ENCODE measurements at regions of chr20 and their contacts with region 1.

Region 1: GRCh38 chr20:50348096-50348495 is 157.5 kb downstream of the CEBPB start:
- DNase-seq: no peak
- H3K4me3 ChIP-seq: no peak overlapping the region
- H3K27ac ChIP-seq: no peak overlapping the region
- H3K4me1 ChIP-seq: peaks cover 24% of the 10 kb centered on the region
- H3K27me3 ChIP-seq: no peaks in the 10 kb centered on the region
- CTCF ChIP-seq: no peak

Region 2: GRCh38 chr20:49915378-49916145 is 432.5 kb before region 1 on chr20 and contains the start of gene SPATA2:
- CTCF ChIA-PET with region 1: no interaction called
- POLR2A ChIA-PET with region 1: interaction called, 12 read pairs
- intact Hi-C with region 1: no loop called
- DNase-seq: peak; percentile 97
- H3K4me3 ChIP-seq: peak within 1 kb of the TSS; percentile 90
- H3K27ac ChIP-seq: peak within 1 kb of the TSS; percentile 100
- H3K4me1 ChIP-seq: peaks cover 8% of the 10 kb centered on the region
- H3K27me3 ChIP-seq: no peaks in the 10 kb centered on the region
- CTCF ChIP-seq: no peak
- total RNA-seq, gene SPATA2: 9.2 and 9.7 TPM in 2 replicates

Region 3: DNA sequence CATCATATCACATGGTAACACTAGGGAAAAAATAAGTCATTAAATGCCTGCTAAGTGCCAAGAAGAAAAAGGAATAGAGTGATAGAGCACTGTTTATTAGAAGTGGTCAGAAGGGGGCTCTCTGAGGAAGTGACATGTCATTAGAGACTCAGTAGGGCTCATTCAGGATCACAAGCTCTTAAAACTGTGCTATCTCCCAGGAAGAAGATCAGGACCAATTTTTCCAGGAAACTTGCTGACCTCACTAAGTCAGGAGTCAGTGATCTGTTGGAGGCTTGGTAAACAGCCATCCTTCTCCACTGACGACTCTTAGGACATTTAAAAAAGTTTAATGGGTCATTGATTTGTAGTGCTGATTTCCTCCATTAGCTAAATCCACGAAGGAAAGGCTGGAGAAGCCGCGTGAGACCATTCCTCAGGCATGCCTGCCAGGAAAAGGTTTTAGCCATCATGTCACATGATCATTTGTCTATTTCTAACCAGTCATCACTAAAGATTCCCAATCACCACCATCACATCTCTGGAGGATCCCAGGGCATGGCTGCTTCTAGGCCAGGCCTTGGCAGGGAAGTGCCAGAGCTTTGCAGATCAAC is 156.2 kb after region 1 on chr20:
- CTCF ChIA-PET with region 1: no interaction called
- POLR2A ChIA-PET with region 1: no interaction called
- intact Hi-C with region 1: no loop called
- DNase-seq: no peak
- H3K4me3 ChIP-seq: no peak overlapping the region
- H3K27ac ChIP-seq: no peak overlapping the region
- H3K4me1 ChIP-seq: peaks cover 2% of the 10 kb centered on the region
- H3K27me3 ChIP-seq: no peaks in the 10 kb centered on the region
- CTCF ChIP-seq: peak; percentile 32

Region 4: DNA sequence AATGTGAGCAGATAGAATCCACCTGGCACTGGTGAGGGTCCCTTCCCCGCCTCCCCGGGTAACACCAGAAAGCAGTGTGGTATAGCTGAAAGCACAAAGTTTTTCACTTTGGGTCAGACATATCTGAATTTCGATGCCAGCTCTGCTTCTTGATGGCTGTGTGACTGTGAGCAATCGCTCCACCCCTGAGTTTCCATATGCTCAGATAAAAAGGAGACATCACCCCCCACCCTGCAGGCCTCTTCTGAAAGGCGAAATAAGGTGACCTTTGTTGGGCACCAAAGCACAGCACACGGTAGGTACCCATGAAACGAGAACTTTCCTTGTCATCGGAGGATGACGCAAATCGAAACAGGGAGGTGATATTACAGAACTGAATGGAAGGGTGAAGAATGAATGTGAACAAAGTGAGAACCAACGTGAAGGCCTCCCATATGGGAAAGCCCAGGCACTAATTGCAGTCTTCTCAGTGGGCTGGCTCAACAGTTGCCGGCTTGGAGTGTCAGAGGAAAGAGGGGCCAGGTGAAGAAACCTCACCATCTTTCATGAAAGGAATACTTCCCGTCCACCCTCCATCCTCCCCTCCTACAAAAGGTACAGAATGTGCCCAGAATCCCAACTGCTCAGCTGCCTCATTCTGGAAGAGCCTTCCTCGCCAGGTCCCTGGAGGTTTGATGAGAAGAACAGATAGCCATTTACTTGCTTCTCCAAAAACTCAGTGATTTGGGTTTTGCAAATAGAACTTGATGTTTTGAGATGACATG is 1132.6 kb after region 1 on chr20:
- CTCF ChIA-PET with region 1: no interaction called
- POLR2A ChIA-PET with region 1: no interaction called
- intact Hi-C with region 1: no loop called
- DNase-seq: no peak
- H3K4me3 ChIP-seq: no peak overlapping the region
- H3K27ac ChIP-seq: no peak overlapping the region
- H3K4me1 ChIP-seq: no peaks in the 10 kb centered on the region
- H3K27me3 ChIP-seq: no peaks in the 10 kb centered on the region
- CTCF ChIP-seq: no peak

Measured in A673 (cell line).